Breast epithelium (tissue), 4 donors: ENCODE measurements at regions of chr20 and their contacts with region 1.

Region 1: GRCh38 chr20:18039063-18039462 is 18.7 kb downstream of the OVOL2 start:
- DNase-seq: no peak
- H3K4me3 ChIP-seq: no peak overlapping the region
- H3K27ac ChIP-seq: no peak overlapping the region
- H3K4me1 ChIP-seq: no peaks in the 10 kb centered on the region
- H3K27me3 ChIP-seq: no peaks in the 10 kb centered on the region
- CTCF ChIP-seq: no peak
- POLR2A ChIP-seq: no peak

Region 2: DNA sequence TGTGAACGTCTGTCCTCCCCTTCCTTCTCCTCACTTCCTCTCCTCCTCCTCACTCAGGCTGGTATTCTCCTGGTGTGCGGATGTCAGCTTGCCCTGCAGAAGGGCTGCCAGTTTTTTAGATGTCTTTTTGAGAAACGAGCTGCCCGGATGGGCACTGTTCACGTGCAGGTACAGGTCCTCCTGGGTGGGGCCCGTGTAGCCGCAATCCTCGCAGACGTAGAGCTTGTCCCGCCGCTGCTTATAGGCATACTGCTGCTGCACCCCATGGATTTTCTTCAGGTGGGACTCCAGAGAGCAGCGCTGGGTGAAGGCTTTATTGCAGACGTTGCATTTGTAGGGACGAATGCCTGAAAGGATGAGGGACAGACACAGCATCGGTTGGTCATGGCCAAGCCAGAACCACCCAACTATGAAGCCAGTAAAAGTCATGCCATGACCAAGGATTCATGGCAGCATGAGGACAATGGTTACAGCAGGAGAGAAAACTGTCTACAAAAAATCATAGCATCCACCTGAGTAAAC is 14.4 kb before region 1 on chr20:
- intact Hi-C with region 1: loop called (anchors 1 kb)
- DNase-seq: no peak
- H3K4me3 ChIP-seq: no peak overlapping the region
- H3K27ac ChIP-seq: no peak overlapping the region
- H3K4me1 ChIP-seq: no peaks in the 10 kb centered on the region
- H3K27me3 ChIP-seq: no peaks in the 10 kb centered on the region
- CTCF ChIP-seq: no peak
- POLR2A ChIP-seq: no peak